Heart right ventricle (tissue), 16 donors: ENCODE measurements at regions of chr13 and their contacts with region 1.

Region 1: GRCh38 chr13:80547885-80548825 is 207.2 kb upstream of the SPRY2 start:
- DNase-seq: peak in 1 of 2 donors; percentile 23
- ATAC-seq: peak in 7 of 8 donors; percentile 72 to 89 (median 82)
- H3K4me3 ChIP-seq: no peak overlapping the region
- H3K27ac ChIP-seq: peak overlapping the region in 8 of 10 donors; percentile 25 to 72 (median 60)
- H3K4me1 ChIP-seq: peaks cover 0 to 43% (median 24%) of the 10 kb centered on the region in 9 donors
- H3K27me3 ChIP-seq: no peaks in the 10 kb centered on the region
- CTCF ChIP-seq: no peak

Region 2: GRCh38 chr13:80630685-80631121 is 82.5 kb after region 1 on chr13:
- intact Hi-C with region 1: loop called in 1 of 10 experiments (anchors 10 kb)
- DNase-seq: peak in 1 of 2 donors; percentile 30
- ATAC-seq: peak; percentile 81 to 96 (median 92)
- H3K4me3 ChIP-seq: no peak overlapping the region
- H3K27ac ChIP-seq: peak overlapping the region in 9 of 10 donors; percentile 22 to 72 (median 55)
- H3K4me1 ChIP-seq: peaks cover 0 to 16% (median 7%) of the 10 kb centered on the region in 9 donors
- H3K27me3 ChIP-seq: no peaks in the 10 kb centered on the region
- CTCF ChIP-seq: no peak